CD4-positive, alpha-beta memory T cell (primary cell): ENCODE measurements at regions of chr19 and their contacts with region 1.

Region 1: GRCh38 chr19:14117668-14118164 is at the start of gene PRKACA:
- DNase-seq: peak; percentile 97 to 99 (median 99)
- H3K4me3 ChIP-seq: peak within 1 kb of the TSS; percentile 57 to 63
- H3K4me3 Mint-ChIP-seq: peak within 1 kb of the TSS; percentile 92 to 98 (median 96)
- H3K27ac ChIP-seq: peak within 1 kb of the TSS; percentile 73
- H3K27ac Mint-ChIP-seq: peak within 1 kb of the TSS; percentile 95 to 98 (median 98)
- H3K4me1 ChIP-seq: peaks cover 41% of the 10 kb centered on the region
- H3K4me1 Mint-ChIP-seq: peaks cover 23 to 50% (median 39%) of the 10 kb centered on the region in 4 donors
- H3K27me3 ChIP-seq: no peaks in the 10 kb centered on the region
- H3K27me3 Mint-ChIP-seq: no peaks in the 10 kb centered on the region
- total RNA-seq, gene PRKACA: 48.9 to 51.7 TPM

Region 2: GRCh38 chr19:13995017-13995728 is 122.5 kb before region 1 on chr19:
- CTCF ChIA-PET with region 1: no interaction called
- POLR2A ChIA-PET with region 1: no interaction called
- intact Hi-C with region 1: no loop called
- DNase-seq: no peak
- H3K4me3 ChIP-seq: no peak overlapping the region
- H3K4me3 Mint-ChIP-seq: no peak overlapping the region
- H3K27ac ChIP-seq: no peak overlapping the region
- H3K27ac Mint-ChIP-seq: peak overlapping the region in 1 of 7 donors; percentile 29
- H3K4me1 ChIP-seq: peaks cover 5% of the 10 kb centered on the region
- H3K4me1 Mint-ChIP-seq: peaks cover 2 to 27% (median 16%) of the 10 kb centered on the region in 4 donors
- H3K27me3 ChIP-seq: no peaks in the 10 kb centered on the region
- H3K27me3 Mint-ChIP-seq: no peaks in the 10 kb centered on the region

Region 3: GRCh38 chr19:14081325-14082093 is 36.2 kb before region 1 on chr19:
- CTCF ChIA-PET with region 1: interaction called, 9 read pairs
- POLR2A ChIA-PET with region 1: interaction called, 24 read pairs
- intact Hi-C with region 1: loop called (anchors 1 kb)
- DNase-seq: peak; percentile 98 to 99 (median 99)
- H3K4me3 ChIP-seq: peak overlapping the region; percentile 61 to 74
- H3K4me3 Mint-ChIP-seq: peak overlapping the region; percentile 87 to 97 (median 92)
- H3K27ac ChIP-seq: peak overlapping the region; percentile 68
- H3K27ac Mint-ChIP-seq: peak overlapping the region; percentile 84 to 98 (median 95)
- H3K4me1 ChIP-seq: peaks cover 18% of the 10 kb centered on the region
- H3K4me1 Mint-ChIP-seq: peaks cover 5 to 28% (median 17%) of the 10 kb centered on the region in 4 donors
- H3K27me3 ChIP-seq: no peaks in the 10 kb centered on the region
- H3K27me3 Mint-ChIP-seq: no peaks in the 10 kb centered on the region

Region 4: GRCh38 chr19:14091081-14091812 is 26.5 kb before region 1 on chr19:
- CTCF ChIA-PET with region 1: interaction called, 4 read pairs
- POLR2A ChIA-PET with region 1: interaction called, 9 read pairs
- intact Hi-C with region 1: loop called (anchors 1 kb)
- DNase-seq: peak; percentile 79 to 84 (median 80)
- H3K4me3 ChIP-seq: peak overlapping the region; percentile 86 to 88
- H3K4me3 Mint-ChIP-seq: peak overlapping the region; percentile 99 to 100 (median 100)
- H3K27ac ChIP-seq: peak overlapping the region; percentile 72
- H3K27ac Mint-ChIP-seq: peak overlapping the region; percentile 95 to 100 (median 99)
- H3K4me1 ChIP-seq: peaks cover 14% of the 10 kb centered on the region
- H3K4me1 Mint-ChIP-seq: peaks cover 10 to 28% (median 21%) of the 10 kb centered on the region in 4 donors
- H3K27me3 ChIP-seq: no peaks in the 10 kb centered on the region
- H3K27me3 Mint-ChIP-seq: peaks cover 0 to 2% of the 10 kb centered on the region in 2 donors